ENCODE measurements at regions of chr2 and their contacts with region 1.

Region 1: DNA sequence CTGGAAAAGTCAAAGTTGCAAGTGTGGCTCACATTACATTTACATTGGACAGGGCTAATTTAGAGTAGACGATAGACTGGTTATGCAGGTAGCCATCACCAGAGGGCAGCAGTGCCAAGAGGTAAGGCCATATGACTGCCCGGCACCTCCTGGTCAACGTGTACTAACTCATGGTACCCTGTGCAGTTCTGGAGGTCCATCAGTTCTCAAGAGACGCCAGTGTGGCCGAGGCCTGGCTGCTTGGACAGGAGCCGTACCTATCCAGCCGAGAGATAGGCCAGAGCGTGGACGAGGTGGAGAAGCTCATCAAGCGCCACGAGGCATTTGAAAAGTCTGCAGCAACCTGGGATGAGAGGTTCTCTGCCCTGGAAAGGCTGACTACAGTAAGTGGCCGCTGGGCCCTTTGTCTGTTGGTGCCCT is 65.8 kb upstream of the EML6 start:
- DNase-seq: peak in 31 of 42 donors; percentile 28 to 86 (median 55)

Region 2: DNA sequence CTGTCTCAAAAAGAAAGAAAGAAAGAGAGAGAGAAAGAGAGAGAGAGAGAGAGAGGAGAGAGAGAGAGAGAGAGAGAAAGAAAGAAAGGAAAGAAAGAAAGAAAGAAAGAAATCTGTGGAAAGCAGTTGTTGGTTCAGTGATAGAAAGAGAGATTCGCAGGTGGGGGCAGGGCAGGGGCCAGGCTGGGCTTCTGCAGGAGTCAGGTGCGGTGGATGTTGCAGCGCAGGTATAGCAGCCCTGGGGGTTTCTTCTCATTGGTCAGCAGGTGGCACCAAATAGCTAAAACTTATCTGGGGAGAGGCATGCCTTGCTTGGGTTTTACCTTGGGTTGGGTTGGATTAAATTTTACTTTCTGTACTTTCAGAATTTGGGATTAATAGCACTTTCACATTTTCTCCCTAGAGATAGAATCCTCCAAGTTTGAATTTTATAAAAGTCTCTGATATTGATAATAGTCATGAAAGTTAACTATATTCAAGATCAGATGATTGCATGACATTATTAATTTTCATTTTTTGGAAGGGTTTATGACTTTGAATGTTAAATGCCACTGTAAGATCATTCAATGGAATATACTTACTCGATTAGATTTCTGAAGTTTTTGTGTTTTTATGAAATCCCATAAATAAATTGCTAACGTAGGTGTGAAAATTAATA is 134.9 kb before region 1 on chr2:
- intact Hi-C with region 1: loop called (anchors 5 kb)
- DNase-seq: peak in 20 of 42 donors; percentile 11 to 73 (median 36)

Region 3: DNA sequence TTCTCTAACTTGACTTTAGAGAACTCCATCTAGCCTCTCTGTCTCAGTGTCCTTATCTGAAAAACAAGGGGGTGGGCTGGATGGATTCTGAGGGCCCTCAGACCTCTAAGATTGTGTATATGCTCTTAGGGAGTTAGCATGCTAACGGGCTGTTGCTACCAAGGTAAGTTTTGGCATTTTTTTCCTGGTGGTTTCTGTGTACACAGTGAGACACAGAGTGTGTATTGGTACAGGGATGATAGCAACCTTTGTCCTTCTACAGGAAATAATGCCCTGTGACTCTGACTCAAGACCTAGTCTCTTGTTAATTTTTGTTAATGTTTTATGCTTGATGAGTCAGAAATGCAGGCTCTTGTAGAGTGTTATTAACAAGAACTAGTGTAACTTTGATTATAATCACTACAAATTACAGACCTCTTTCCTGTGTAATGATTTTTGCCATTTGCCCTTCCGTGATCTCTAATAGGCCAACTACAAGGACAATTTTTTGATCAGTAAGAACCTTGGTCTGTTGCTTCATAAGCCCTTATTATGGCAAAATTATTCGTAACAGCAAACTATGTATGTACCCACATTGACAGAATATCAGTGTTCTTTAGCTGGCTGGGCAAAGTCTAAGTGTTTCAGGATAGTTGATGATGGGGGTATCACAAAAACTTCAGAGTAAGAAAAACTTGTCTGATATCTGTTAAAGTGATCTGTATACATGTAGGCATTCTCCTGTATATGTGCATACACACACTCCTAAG is 111.8 kb before region 1 on chr2:
- intact Hi-C with region 1: no loop called
- DNase-seq: no peak

Region 4: DNA sequence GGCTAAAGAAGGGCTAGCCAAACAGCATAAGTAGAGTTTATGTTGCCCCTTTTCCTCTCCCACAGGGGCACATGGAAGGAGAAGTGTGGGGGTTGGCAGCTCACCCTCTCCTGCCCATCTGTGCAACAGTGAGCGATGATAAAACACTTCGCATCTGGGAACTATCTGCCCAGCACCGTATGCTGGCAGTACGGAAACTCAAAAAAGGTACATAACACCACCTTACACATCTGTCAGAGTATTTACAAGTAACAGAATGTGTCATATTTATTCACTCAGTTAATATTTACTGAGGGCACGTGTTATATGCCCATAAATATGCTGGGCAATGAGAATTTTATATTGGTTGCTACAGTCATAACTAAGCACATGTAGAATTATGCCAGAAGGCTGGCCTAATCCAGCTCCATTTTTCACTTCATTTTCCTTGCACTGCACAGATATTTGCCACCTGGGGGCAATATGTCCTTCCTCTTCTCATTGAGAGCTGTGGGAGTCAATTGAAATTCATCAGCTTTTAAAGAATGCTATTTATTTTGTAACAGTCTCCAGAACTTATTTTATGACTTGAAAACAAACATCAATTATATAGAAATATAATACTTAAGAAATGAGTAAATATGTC is 242.0 kb after region 1 on chr2:
- intact Hi-C with region 1: no loop called
- DNase-seq: peak in 26 of 42 donors; percentile 13 to 80 (median 54)

Measured in head of caudate nucleus (tissue), 42 donors.